Panc1 (cell line): ENCODE measurements at regions of chr19 and their contacts with region 1.

Region 1: DNA sequence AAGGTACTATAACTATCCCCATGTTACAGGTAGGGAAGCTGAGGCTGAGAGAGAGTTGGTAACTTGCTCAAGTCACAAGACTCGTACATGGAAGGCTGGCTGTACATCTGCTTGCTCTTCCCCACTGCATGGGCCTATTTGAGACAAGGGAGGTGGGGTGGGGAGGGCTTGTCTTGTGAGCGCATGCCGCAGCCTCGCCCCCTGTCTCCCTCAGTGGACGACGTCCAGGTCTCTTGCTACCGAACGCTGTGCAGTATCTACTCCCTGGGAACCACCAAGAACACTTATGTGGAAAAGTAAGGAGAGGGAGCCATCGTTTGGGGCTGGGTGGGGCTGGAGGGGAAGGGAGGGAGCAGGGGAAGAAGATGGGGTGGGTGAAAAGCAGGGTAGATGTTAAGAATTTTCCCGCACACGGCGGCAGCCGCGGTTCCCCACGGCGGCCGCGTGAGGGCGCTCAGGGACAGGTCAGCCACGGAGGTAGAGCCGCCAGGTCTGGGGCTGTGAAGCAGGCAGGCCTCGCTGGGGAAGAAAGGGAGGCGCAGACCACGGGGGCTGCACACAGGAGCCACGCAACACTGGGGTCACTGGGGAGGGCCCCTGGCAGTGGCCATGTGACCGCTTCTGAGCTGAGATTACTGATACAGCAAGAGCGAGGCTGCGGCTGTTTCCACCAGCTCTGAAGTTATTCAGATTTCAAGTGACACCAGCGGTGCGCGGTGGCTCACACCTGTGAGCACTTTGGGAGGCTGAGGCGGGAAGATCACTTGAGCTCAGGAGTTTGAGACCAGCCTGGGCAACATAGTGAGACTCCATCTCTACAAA is 81.5 kb downstream of the RYR1 start:
- DNase-seq: peak; percentile 85
- ATAC-seq: peak; percentile 91
- H3K4me3 ChIP-seq: peak overlapping the region in 1 of 2 experiments; percentile 14; a peak in 2 of 4 replicates
- H3K27ac ChIP-seq: 0 out of 2 replicates have a peak overlapping the region, but pooled peaks have one; percentile 2
- H3K4me1 ChIP-seq: peaks cover 4% of the 10 kb centered on the region; the same call in 1 of the 2 replicates
- H3K27me3 ChIP-seq: no peaks in the 10 kb centered on the region
- CTCF ChIP-seq: no peak

Region 2: DNA sequence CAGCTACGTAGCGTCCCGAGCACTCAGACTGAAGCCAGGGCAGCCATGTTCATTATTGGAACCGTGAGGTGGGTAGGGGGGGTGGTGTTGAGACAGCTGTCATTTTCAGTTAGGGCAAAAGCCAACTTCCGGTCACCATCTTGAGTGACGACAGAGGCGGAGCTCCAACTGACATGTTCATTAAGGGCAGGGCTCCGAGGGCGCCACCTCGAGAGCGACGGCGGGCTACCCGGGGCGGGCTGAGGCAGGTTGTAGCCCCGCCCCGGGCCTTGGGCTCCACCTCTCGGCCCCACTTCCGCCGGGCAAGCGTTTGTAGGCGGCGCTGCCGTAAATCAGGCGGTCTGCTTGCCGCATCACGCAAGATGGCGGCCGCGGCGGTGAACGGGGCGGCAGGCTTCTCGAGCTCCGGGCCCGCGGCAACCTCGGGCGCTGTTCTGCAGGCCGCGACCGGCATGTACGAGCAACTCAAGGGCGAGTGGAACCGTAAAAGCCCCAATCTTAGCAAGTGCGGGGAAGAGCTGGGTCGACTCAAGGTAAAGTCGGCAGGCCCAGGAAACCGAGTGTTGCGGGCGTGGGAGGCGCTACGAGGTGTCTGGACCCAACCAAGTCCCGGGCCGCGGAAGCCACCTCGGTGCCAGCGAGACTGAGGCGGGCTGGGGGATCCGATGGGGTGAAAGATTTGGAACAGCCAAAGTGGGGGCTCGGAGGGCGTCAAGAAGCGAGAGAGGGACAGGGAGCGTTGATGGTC is 140.4 kb before region 1 on chr19 and contains the start of gene PSMD8:
- CTCF ChIA-PET with region 1: no interaction called
- POLR2A ChIA-PET with region 1: interaction called, 10 read pairs
- in situ Hi-C with region 1: no loop called
- intact Hi-C with region 1: no loop called
- DNase-seq: peak; percentile 97
- ATAC-seq: peak; percentile 99
- H3K4me3 ChIP-seq: peak within 1 kb of the TSS; percentile 85 to 87
- H3K27ac ChIP-seq: peak within 1 kb of the TSS; percentile 92
- H3K4me1 ChIP-seq: peaks cover 10% of the 10 kb centered on the region
- H3K27me3 ChIP-seq: no peaks in the 10 kb centered on the region
- CTCF ChIP-seq: no peak
- total RNA-seq, gene PSMD8: 388 TPM

Region 3: DNA sequence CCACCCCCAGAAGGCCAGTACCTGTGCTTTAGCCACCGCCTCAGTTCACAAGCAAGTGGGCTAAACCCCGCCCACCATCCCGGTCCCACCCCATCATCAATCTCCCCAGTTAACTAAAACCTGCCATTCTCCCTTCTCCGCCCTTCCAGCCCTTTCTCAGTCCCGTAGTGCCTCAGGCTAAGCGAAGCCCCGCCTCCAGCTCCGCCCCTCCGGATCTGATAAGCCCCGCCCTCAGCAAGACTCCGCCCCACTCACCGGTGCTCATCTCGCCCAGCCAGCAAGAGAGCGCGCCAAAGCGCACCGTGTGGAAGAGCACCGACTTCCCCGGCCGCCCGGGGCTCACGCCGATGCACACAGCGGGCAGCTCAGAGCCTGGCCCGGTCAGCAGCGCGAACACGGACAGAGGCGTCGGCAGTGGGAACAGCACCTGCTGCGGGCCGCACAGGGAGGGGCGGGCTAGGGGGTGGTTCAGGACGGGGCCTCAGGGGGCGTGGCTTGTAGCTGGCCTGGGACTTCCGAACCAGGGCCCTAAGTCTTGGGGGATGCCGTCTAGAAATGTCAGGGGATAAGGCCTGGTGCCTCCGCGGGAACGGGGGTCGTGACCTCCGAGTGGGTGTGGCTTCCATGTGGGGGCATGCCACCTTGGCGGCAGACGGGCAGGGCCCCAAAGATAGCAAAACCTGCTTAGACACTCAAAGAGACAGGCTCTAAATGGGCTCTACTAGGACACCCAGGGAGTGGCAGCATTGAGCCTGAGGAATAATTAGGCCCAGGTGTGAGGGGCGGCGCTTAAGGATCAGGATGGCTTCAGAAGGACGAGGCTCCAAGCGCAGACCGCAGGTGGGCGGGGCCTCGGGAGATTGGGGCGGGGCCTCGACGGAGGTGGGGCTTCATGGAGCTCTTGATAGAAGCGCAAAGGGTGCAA is 81.3 kb after region 1 on chr19:
- CTCF ChIA-PET with region 1: no interaction called
- POLR2A ChIA-PET with region 1: interaction called, 11 read pairs
- in situ Hi-C with region 1: no loop called
- intact Hi-C with region 1: no loop called
- DNase-seq: peak; percentile 76
- ATAC-seq: peak; percentile 89
- H3K4me3 ChIP-seq: peak overlapping the region; percentile 32 to 50
- H3K27ac ChIP-seq: no peak overlapping the region
- H3K4me1 ChIP-seq: no peaks in the 10 kb centered on the region
- H3K27me3 ChIP-seq: no peaks in the 10 kb centered on the region
- CTCF ChIP-seq: no peak

Region 4: GRCh38 chr19:38759590-38760003 is 244.6 kb after region 1 on chr19:
- CTCF ChIA-PET with region 1: interaction called, 6 read pairs
- POLR2A ChIA-PET with region 1: interaction called, 15 read pairs
- in situ Hi-C with region 1: no loop called
- intact Hi-C with region 1: no loop called
- DNase-seq: no peak
- ATAC-seq: no peak
- H3K4me3 ChIP-seq: no peak overlapping the region
- H3K27ac ChIP-seq: no peak overlapping the region
- H3K4me1 ChIP-seq: no peaks in the 10 kb centered on the region
- H3K27me3 ChIP-seq: no peaks in the 10 kb centered on the region
- CTCF ChIP-seq: no peak

Region 5: GRCh38 chr19:39254531-39255345 is 739.7 kb after region 1 on chr19:
- CTCF ChIA-PET with region 1: no interaction called
- POLR2A ChIA-PET with region 1: interaction called, 11 read pairs
- in situ Hi-C with region 1: no loop called
- intact Hi-C with region 1: no loop called
- DNase-seq: no peak
- ATAC-seq: no peak
- H3K4me3 ChIP-seq: no peak overlapping the region
- H3K27ac ChIP-seq: no peak overlapping the region
- H3K4me1 ChIP-seq: no peaks in the 10 kb centered on the region
- H3K27me3 ChIP-seq: peaks cover 4% of the 10 kb centered on the region; the same call in 1 of the 2 replicates
- CTCF ChIP-seq: no peak